Lower leg skin (tissue), 4 donors: ENCODE measurements at regions of chr3 and their contacts with region 1.

Region 1: GRCh38 chr3:195863121-195864006 is 45.0 kb downstream of the TNK2 start:
- DNase-seq: peak; percentile 80 to 97
- H3K4me3 ChIP-seq: no peak overlapping the region
- CTCF ChIP-seq: peak in 1 of 3 donors; percentile 74
- POLR2A ChIP-seq: no peak

Region 2: DNA sequence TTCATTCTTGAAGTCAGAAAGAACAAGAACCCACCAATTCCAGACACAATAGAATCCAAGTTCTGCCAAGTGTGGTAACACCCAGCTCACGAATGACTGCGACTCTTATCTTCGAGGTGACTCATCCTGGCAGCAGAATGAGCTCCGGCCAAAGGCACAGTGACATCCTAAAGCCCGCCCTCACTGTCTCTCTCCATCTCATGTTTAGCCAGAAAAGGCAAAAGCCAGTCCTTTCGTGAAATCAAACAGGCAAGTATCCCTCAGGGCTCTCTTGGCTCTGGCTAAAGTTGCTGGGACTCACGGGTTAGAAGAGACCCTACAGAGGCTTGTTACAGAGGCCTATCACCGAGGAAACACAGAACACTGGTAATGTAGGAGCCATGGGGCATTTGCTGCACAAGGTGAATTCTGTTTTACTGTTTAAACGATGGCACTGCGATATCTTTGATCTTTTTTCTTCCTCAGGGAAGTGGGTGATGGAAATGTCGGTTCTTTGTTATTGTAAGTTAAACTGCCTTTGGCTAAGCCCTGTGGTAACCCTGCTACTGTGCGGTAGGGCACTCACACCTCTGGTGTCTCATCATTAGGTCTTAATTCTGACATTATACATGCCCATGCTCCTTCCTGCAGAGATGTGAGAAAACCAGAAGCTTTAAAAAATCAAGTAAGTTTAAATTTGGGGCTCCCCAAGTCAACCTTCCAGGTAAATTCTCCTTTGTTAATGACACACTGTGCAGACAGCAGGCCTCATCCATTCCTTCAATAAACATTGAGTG is 1022.1 kb before region 1 on chr3:
- intact Hi-C with region 1: no loop called
- DNase-seq: no peak
- H3K4me3 ChIP-seq: no peak overlapping the region
- CTCF ChIP-seq: no peak
- POLR2A ChIP-seq: no peak

Region 3: DNA sequence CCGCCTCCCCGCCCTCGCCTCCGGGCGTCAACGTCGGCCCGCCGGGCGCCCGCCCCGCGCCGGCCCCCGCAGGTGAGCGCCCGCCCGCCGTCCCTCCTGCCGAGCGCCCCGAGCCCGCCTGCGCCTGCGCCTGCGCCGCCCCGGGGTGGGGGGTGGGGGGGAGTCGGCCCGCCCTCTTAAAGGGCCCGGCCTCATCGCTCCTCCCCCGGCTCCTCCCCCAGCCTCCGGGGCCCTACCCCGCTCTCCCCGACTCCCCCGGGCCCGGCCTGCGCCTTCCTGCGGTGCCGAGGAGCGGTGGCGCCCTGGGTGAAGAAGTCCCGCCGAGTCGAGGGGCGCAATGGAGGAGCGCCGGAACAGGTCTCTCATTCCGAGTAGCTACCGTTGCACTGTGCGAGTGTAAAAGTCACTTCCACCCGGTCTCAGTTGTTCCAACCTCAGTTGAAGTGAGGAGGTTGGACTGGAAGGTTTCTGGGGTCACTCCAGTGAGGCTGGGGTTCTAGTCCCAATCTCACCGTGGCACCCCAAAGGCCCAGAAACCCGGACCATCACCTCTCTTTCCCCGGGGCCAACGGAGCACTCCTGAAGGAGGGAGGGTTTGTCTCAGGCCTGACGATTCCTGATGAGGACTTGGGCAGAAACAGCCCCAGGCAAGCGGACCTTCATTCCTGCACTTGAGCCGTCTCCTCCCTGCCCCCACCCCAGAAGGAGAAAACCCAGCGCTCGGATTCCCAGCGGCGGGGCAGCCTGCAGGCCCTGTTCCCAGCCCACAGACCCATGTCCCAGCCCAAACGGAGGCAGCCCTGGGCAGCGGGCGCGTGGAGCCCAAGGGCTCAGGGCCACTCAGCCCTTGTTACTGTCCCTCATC is 46.5 kb after region 1 on chr3:
- intact Hi-C with region 1: loop called (anchors 10 kb)
- DNase-seq: peak; percentile 69 to 96
- H3K4me3 ChIP-seq: no peak overlapping the region
- CTCF ChIP-seq: no peak
- POLR2A ChIP-seq: no peak

Region 4: GRCh38 chr3:196111939-196112386 is 248.6 kb after region 1 on chr3:
- intact Hi-C with region 1: no loop called
- DNase-seq: no peak
- H3K4me3 ChIP-seq: no peak overlapping the region
- CTCF ChIP-seq: no peak
- POLR2A ChIP-seq: no peak

Region 5: DNA sequence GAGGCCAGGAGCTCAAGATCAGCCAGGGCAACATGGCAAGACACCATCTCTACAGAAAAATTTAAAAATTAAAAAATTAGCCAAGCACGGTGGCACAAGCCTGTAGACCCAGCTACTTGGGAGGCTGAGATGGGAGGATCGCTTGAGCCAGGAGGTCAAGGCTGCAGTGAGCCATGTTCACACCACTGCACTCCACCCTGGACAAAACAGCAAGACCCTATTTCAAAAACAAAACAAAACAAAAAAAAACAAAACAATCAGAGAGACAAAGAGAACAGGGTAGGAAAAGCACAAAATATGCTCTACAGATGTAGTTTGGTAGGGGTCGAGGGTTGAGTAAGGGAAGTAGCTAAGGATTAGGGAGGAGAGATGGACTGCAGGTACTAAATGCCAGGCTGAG is 451.2 kb after region 1 on chr3:
- intact Hi-C with region 1: no loop called
- DNase-seq: no peak
- H3K4me3 ChIP-seq: no peak overlapping the region
- CTCF ChIP-seq: no peak
- POLR2A ChIP-seq: no peak